A549 (cell line): ENCODE measurements at regions of chr17 and their contacts with region 1.

Region 1: GRCh38 chr17:3913531-3914311 is 2.5 kb downstream of the P2RX1 start:
- DNase-seq: peak; percentile 77 to 91
- ATAC-seq: peak; percentile 73 to 92
- H3K4me3 ChIP-seq: no peak overlapping the region
- H3K27ac ChIP-seq: peak overlapping the region in 1 of 2 experiments; percentile 65; a peak in 3 of 6 replicates
- H3K4me1 ChIP-seq: peaks cover 21% of the 10 kb centered on the region; the same call in 2 of the 3 replicates
- CTCF ChIP-seq: peak; percentile 94
- EP300 ChIP-seq: no peak
- POLR2A ChIP-seq: no peak
- RAD21 ChIP-seq: peak; percentile 88 to 91

Region 2: DNA sequence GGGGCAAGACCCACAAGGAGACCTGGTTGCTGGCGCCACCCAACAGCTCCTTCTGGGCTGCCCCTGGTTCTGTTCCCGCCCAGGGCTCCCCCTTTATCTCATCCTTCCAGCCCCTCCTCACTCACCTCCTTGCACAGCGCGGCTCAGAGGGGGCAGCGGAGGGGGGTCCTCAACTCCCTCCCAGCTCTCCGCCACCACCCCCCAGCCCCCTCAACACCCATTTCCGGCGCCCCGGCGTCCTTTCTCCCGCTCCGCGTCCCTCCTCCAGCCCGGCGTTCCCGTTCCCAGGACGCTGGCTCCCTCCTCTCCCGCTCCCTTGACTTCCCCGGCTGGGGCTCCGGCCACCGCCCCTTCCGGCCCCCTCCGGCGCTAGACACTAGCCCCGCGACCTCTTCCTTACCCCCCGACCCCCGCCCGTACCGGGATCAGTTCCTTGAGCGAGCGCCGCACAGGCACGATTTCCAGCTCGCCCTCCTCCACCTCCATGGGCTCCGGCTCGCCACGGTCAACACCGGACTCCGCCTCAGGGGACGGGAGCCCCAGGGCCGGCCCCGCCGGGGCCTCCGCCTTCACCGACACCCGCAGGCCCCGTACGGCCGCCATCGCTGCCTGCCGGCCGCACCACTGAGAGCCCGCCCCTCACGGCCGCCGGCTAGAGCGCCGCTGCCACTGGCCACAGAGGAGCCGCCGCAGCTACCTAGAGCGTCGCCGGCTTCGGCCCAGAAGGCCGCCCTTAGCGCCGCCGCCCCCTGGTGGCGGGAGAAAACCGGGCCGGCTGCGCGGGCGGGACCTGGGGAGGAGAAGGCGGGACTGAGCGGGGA is 67.9 kb before region 1 on chr17 and contains the start of gene NCBP3:
- CTCF ChIA-PET with region 1: interaction called, 72 read pairs
- POLR2A ChIA-PET with region 1: interaction called, 3 read pairs
- DNase-seq: peak; percentile 97
- ATAC-seq: peak; percentile 92 to 98
- H3K4me3 ChIP-seq: peak within 1 kb of the TSS; percentile 93
- H3K27ac ChIP-seq: peak within 1 kb of the TSS; percentile 96 to 97
- H3K4me1 ChIP-seq: peaks cover 17% of the 10 kb centered on the region
- CTCF ChIP-seq: peak; percentile 95
- EP300 ChIP-seq: no peak
- POLR2A ChIP-seq: peak; percentile 92
- RAD21 ChIP-seq: peak; percentile 4 to 47; a peak in 3 of 5 replicates
- polyA plus RNA-seq, gene NCBP3: 27.7 and 32.7 TPM in 2 replicates

Region 3: DNA sequence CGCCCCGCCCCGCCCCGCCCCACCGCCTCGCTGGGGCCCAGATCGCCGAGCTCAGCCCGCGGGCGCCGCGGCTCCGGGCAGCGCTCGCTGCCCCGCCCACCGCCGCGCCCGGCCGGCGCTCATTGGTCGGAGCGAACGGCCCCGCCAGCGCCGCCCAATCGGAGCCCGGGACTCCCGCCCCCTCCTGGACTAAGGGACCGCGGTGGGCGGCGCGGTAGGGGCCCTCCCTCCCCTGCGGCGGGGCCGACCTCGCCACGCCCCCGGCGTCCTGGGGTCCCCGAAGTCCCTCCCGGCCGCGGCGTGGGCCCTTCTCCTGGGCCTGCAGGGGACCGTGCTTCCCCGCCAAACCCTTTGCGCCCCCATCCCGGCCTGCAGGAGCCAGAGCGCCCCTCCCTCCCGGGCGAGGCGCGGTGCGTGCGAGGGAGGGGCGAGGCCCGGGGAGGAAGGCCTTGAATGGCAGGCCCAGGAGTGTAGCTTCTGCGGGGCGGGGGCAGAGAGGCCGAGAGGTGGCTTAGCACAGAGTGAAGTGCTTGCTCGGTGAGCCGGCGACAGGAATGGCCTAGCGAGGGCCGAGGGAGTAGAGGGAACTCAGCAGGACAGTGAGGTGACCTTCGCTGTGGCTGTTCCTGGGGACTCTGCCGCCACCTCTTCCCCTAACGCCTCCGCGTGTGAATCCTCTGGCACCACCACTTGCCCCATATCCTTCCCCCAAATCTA is 20.6 kb before region 1 on chr17 and contains the start of gene CAMKK1:
- CTCF ChIA-PET with region 1: interaction called, 256 read pairs
- POLR2A ChIA-PET with region 1: no interaction called
- DNase-seq: peak; percentile 86 to 98
- ATAC-seq: peak; percentile 57 to 78
- H3K4me3 ChIP-seq: peak within 1 kb of the TSS; percentile 79
- H3K27ac ChIP-seq: peak within 1 kb of the TSS; percentile 87 to 89
- H3K4me1 ChIP-seq: peaks cover 54% of the 10 kb centered on the region
- CTCF ChIP-seq: no peak
- EP300 ChIP-seq: no peak
- POLR2A ChIP-seq: peak; percentile 15; the same call in 1 of the 2 replicates
- RAD21 ChIP-seq: no peak
- polyA plus RNA-seq, gene CAMKK1: 6.9 and 7.7 TPM in 2 replicates

Region 4: DNA sequence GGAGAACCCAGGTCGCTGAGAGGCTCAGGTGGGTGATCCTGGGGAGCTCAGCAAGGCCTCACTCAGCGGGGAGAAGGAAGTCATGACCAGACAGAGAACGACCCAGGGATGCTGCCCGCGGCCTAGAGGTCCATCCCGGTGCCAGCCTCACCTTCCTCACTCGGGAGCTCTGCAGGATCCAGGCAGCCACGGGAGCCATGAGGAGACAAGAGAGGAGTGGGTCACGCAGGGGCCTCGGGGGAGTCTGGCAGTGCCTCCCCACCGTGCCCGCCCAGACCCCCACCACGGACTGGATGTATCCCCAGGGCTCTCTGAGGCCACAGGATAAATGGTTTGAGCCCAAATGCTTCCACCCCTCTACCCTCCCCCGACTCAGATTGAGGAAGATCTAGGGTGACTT is 39.8 kb after region 1 on chr17:
- CTCF ChIA-PET with region 1: interaction called, 29 read pairs
- POLR2A ChIA-PET with region 1: no interaction called
- DNase-seq: no peak
- ATAC-seq: peak in 1 of 2 experiments; percentile 7; a peak in 1 of 6 replicates
- H3K4me3 ChIP-seq: no peak overlapping the region
- H3K27ac ChIP-seq: no peak overlapping the region
- H3K4me1 ChIP-seq: no peaks in the 10 kb centered on the region
- CTCF ChIP-seq: no peak
- EP300 ChIP-seq: no peak
- POLR2A ChIP-seq: no peak
- RAD21 ChIP-seq: no peak

Region 5: DNA sequence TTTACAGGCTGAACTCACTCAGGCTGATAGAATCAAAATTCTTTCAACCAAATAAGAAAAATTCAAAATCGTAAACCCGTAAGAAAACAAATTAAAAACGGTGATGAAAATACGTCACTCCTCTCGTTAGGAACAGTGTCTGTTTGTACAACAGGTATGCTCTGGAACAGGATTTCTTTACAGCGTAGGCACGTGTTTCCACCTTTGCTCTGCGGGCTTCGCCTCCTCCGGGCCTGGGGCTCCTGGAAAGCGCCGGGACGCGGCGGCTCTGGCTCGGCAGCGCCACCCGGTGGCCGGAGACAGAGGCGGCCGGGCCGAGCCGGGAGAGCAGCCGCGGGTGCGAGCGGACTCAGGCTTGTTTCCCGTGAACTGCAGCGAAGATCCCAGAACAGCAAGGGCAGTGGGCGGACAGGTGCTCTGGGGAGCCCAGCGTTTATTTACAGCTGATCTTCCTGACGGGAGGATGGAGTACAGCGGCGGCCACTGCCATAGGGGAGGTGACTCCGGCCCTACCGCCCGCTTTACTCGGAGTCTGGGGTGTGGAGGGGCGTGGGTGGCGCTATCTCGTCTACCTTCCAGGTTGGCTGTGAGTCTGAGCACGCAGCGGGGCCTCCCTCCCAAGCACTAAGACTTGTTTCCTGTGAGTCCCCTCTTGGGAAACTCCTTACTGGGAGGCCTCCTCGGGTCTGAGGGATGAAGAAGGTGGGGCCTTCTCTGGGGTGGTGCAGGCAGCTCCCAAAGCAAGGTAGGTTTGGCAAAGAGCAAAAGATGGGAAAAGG is 91.0 kb after region 1 on chr17:
- CTCF ChIA-PET with region 1: interaction called, 166 read pairs
- POLR2A ChIA-PET with region 1: no interaction called
- DNase-seq: peak; percentile 56 to 81
- ATAC-seq: peak; percentile 64 to 85; a peak in 5 of 6 replicates
- H3K4me3 ChIP-seq: no peak overlapping the region
- H3K27ac ChIP-seq: no peak overlapping the region
- H3K4me1 ChIP-seq: peaks cover 23% of the 10 kb centered on the region
- CTCF ChIP-seq: peak; percentile 95
- EP300 ChIP-seq: no peak
- POLR2A ChIP-seq: no peak
- RAD21 ChIP-seq: peak; percentile 89

Region 6: DNA sequence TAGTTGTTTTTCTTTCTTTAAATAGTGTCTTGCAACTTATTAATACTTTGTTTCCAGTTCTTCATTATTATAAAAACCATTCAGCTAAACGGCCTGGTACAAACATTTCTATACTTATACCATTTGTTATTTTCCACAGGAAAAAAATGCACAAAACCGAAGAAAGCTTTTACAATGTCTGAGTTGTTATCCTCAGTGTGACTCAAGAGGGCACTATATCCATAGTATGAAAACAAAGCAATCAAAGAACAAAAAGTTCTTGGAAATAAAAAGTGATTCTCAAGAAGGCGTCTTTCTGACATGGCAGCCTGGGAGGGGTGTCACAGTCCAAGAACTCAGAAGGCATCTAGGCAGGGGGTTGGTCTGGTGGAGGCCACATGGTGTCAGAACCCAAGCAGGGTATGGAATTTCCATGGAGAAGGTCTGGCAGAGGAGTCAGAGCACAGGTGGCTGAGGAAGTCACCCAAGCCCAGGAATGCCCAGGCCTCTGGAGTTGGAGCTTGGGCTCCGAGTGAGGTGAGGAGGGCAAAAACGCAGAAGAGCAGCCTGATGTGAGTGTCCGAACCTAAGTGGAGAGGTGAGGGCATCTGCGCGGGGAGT is 121.5 kb after region 1 on chr17:
- CTCF ChIA-PET with region 1: interaction called, 13 read pairs
- POLR2A ChIA-PET with region 1: no interaction called
- DNase-seq: no peak
- ATAC-seq: no peak
- H3K4me3 ChIP-seq: no peak overlapping the region
- H3K27ac ChIP-seq: no peak overlapping the region
- H3K4me1 ChIP-seq: no peaks in the 10 kb centered on the region
- CTCF ChIP-seq: no peak
- EP300 ChIP-seq: no peak
- POLR2A ChIP-seq: no peak
- RAD21 ChIP-seq: no peak

Region 7: GRCh38 chr17:4086041-4086483 is 172.3 kb after region 1 on chr17:
- CTCF ChIA-PET with region 1: interaction called, 10 read pairs
- POLR2A ChIA-PET with region 1: no interaction called
- DNase-seq: no peak
- ATAC-seq: no peak
- H3K4me3 ChIP-seq: no peak overlapping the region
- H3K27ac ChIP-seq: no peak overlapping the region
- H3K4me1 ChIP-seq: no peaks in the 10 kb centered on the region
- CTCF ChIP-seq: no peak
- EP300 ChIP-seq: no peak
- POLR2A ChIP-seq: no peak
- RAD21 ChIP-seq: no peak